ENCODE measurements at regions of chrX and their contacts with region 1.

Region 1: GRCh38 chrX:56729152-56729850 is at the start of gene NBDY:
- DNase-seq: peak; percentile 20
- H3K4me3 Mint-ChIP-seq: peak within 1 kb of the TSS; percentile 83
- H3K27ac Mint-ChIP-seq: peak within 1 kb of the TSS; percentile 73
- H3K4me1 Mint-ChIP-seq: peaks cover 33% of the 10 kb centered on the region
- H3K27me3 Mint-ChIP-seq: no peaks in the 10 kb centered on the region
- total RNA-seq, gene NBDY: 29.2 to 32.7 TPM

Region 2: DNA sequence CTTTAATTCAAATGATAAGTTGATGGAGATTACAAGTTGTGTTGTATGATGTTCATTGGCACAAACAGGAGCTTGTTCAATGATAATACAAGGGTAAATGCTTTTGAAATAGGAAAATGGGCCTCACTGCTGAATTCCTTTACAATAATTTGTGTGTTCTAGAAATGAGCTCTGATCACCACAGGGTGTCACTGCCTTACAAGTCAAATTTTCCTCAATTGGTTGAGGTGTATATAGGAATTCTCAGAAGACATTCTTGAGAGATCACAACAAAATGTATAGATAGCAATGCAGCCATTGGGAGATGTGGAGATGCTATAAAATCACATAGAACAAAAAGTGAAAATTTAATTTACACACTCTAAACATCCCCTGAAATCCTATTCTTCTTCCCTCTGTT is 447.5 kb before region 1 on chrX:
- CTCF ChIA-PET with region 1: interaction called, 39 read pairs
- POLR2A ChIA-PET with region 1: interaction called, 7 read pairs
- DNase-seq: peak; percentile 17
- H3K4me3 Mint-ChIP-seq: no peak overlapping the region
- H3K27ac Mint-ChIP-seq: no peak overlapping the region
- H3K4me1 Mint-ChIP-seq: peaks cover 10% of the 10 kb centered on the region
- H3K27me3 Mint-ChIP-seq: no peaks in the 10 kb centered on the region

Region 3: GRCh38 chrX:56744996-56745395 is 15.7 kb after region 1 on chrX:
- CTCF ChIA-PET with region 1: no interaction called
- POLR2A ChIA-PET with region 1: no interaction called
- DNase-seq: no peak
- H3K4me3 Mint-ChIP-seq: no peak overlapping the region
- H3K27ac Mint-ChIP-seq: no peak overlapping the region
- H3K4me1 Mint-ChIP-seq: peaks cover 5% of the 10 kb centered on the region
- H3K27me3 Mint-ChIP-seq: no peaks in the 10 kb centered on the region

Measured in activated CD4-positive, alpha-beta memory T cell treated with anti-CD3 and anti-CD28 coated beads, Interleukin-2, amount 10 ng/mL, durations not matched to agents 7 days and 5 days (primary cell).